Sciatic nerve (tissue), 2 donors: ENCODE measurements at regions of chr9 and their contacts with region 1.

Region 1: GRCh38 chr9:27402626-27403025 is 105.7 kb upstream of the EQTN start:
- DNase-seq: no peak
- ATAC-seq: no peak

Region 2: GRCh38 chr9:27379311-27380251 is 23.0 kb before region 1 on chr9:
- intact Hi-C with region 1: loop called (anchors 1 kb)
- DNase-seq: no peak
- ATAC-seq: no peak

Region 3: GRCh38 chr9:27519466-27520465 is 117.1 kb after region 1 on chr9:
- intact Hi-C with region 1: no loop called
- DNase-seq: no peak
- ATAC-seq: no peak

Region 4: GRCh38 chr9:28720746-28721145 is 1318.1 kb after region 1 on chr9:
- intact Hi-C with region 1: no loop called
- DNase-seq: no peak
- ATAC-seq: no peak